OCI-LY7 (cell line): ENCODE measurements at regions of chr4 and their contacts with region 1.

Region 1: DNA sequence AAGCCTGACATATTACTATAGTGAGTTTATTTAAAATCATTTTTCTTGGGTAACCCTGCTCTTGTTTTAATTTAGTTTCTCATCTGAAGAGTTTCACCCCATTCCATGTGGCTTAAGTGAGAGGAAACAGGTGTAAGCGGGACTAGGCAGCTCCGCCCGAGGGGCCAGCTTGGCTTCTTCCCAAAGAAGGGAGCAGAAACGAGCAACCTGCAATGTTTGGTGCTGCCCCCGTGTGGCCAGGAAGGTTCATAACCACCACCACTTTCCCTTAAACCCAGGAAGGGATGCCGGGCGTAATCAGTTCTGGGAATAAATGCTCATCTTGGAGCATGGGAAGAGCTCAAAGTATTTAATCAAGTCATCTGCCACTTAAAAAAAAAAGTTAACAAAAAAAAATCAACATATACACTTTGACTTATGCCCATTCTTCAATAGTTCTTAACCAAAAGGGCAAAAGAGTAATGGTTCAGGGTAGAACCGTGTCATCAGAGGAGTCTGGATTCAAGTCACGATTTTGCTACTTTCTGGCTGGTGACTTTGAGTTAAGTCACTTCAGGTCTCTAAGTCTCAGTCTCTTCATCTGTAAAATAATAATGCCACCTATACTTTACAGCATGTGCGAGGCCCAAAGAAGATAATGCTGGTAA is 147.9 kb downstream of the NSUN7 start:
- DNase-seq: peak; percentile 73
- H3K4me3 ChIP-seq: peak overlapping the region; percentile 10
- H3K27ac ChIP-seq: no peak overlapping the region
- H3K4me1 ChIP-seq: peaks cover 8% of the 10 kb centered on the region
- CTCF ChIP-seq: peak; percentile 97

Region 2: GRCh38 chr4:40840985-40841571 is 56.6 kb before region 1 on chr4:
- CTCF ChIA-PET with region 1: interaction called, 3 read pairs
- POLR2A ChIA-PET with region 1: no interaction called
- intact Hi-C with region 1: loop called (anchors 5 kb)
- DNase-seq: peak; percentile 79
- H3K4me3 ChIP-seq: no peak overlapping the region
- H3K27ac ChIP-seq: no peak overlapping the region
- H3K4me1 ChIP-seq: peaks cover 12% of the 10 kb centered on the region
- CTCF ChIP-seq: peak; percentile 93

Region 3: DNA sequence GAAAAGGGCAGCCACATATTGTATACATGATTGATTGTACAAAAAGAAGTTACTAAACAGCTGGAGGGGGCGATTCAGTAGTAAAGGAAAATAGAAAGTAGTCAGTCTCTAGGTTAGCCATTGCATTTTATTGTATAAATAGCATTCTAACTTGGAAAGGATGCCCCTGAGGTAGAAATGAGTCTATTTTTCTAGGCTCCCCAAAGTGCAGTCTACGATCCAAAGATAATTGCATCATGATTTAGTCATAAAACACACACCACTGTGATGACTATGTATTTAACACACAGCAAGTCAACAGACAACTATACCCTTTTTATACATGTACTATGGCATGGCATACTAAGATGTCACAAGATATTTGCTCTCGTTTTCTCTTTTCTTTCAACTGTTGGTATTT is 111.7 kb after region 1 on chr4:
- CTCF ChIA-PET with region 1: no interaction called
- POLR2A ChIA-PET with region 1: no interaction called
- intact Hi-C with region 1: no loop called
- DNase-seq: no peak
- H3K4me3 ChIP-seq: no peak overlapping the region
- H3K27ac ChIP-seq: no peak overlapping the region
- H3K4me1 ChIP-seq: peaks cover 8% of the 10 kb centered on the region
- CTCF ChIP-seq: no peak